ENCODE measurements at regions of chr17 and their contacts with region 1.

Region 1: DNA sequence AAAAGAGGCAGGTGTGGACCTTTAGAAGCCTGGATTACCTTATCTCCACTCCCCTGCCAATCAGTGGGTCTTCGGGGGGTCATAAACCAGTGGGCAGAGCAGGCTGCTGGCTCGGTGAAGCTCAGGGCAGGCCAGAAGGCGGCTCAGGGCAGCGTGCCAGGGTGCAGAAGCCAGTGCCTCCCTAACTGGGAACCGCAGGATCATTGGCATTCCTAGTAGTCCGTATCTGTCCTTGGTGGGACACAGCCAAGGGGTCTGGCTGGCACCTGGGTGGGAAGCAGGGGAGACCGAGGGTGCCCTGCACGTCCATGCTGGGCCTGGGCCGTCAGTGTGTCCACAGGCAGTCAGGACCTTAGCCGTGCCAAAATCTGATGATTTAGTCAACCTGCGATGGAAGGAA is 76.8 kb downstream of the SEC14L1 start:
- DNase-seq: no peak
- ATAC-seq: no peak
- H3K4me3 ChIP-seq: no peak overlapping the region
- H3K27ac ChIP-seq: no peak overlapping the region
- H3K4me1 ChIP-seq: no peaks in the 10 kb centered on the region
- H3K27me3 ChIP-seq: no peaks in the 10 kb centered on the region
- CTCF ChIP-seq: no peak

Region 2: GRCh38 chr17:77127735-77128361 is 89.7 kb before region 1 on chr17:
- CTCF ChIA-PET with region 1: no interaction called
- POLR2A ChIA-PET with region 1: no interaction called
- intact Hi-C with region 1: no loop called
- DNase-seq: no peak
- ATAC-seq: no peak
- H3K4me3 ChIP-seq: no peak overlapping the region
- H3K27ac ChIP-seq: peak overlapping the region; percentile 95; the same call in 1 of the 2 replicates
- H3K4me1 ChIP-seq: peaks cover 60% of the 10 kb centered on the region
- H3K27me3 ChIP-seq: no peaks in the 10 kb centered on the region
- CTCF ChIP-seq: no peak

Region 3: DNA sequence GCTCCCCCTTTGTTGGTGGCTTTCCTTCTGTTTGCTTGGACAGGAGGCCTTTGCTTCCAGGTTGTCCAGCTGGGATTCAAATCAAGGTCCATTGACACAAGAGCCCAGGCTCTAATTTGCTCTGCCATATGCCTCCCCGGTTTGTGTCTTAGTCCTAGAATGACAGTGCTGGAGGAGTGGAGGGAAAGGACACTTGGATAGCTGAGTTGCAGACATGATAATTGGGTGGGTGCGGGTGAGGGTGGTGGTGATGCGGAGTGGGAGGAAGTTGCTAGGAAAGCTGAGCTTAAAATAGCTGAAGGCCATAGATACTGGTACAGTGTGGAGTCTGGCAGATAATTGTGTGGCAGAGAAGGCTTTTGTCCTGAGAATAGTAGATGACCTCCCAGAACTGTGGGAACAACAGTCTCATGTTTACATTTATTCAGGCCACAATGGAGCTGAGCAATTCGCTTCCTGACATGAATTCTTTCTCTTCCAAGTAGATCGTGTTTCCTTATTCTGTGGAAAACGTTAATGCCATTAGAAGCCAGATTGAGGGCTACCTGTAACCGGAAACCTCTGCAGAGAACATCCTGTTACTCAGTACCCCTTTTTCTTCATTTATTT is 53.0 kb before region 1 on chr17:
- CTCF ChIA-PET with region 1: no interaction called
- POLR2A ChIA-PET with region 1: no interaction called
- intact Hi-C with region 1: no loop called
- DNase-seq: no peak
- ATAC-seq: peak; percentile 25; the same call in 1 of the 2 replicates
- H3K4me3 ChIP-seq: no peak overlapping the region
- H3K27ac ChIP-seq: no peak overlapping the region
- H3K4me1 ChIP-seq: peaks cover 6% of the 10 kb centered on the region; the same call in 1 of the 2 replicates
- H3K27me3 ChIP-seq: no peaks in the 10 kb centered on the region
- CTCF ChIP-seq: no peak

Region 4: DNA sequence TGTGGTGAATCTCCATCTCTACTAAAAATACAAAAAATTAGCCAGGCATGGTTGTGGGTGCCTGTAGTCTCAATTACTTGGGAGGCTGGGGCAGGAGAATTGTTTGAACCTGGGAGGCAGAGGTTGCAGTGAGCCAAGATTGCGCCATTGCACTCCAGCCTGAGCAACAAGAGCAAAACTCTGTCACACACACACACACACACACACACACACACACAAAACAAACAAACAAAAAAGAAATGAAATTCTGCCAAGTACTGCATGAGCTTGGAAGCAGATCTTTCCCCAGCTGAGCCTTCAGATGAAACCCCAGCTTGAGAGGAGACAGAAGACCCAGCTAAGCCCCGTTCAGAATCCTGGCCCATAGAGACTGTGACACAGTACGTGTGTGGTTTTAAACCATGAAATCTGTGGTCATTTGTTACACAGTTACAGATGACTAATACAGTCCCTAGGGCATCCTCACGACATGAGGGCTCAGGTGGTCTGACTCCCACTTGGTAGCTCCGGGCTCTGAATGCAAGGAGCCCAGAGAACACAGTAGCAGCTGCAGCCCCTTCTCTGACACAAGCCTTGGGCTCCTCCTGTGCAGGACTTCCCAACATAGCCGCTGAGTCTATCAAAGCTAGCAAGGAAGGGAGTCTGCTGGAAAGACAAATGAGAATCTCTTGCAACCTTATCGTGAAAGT is 56.0 kb after region 1 on chr17:
- CTCF ChIA-PET with region 1: interaction called, 14 read pairs
- POLR2A ChIA-PET with region 1: no interaction called
- intact Hi-C with region 1: no loop called
- DNase-seq: peak; percentile 49
- ATAC-seq: peak; percentile 46
- H3K4me3 ChIP-seq: no peak overlapping the region
- H3K27ac ChIP-seq: no peak overlapping the region
- H3K4me1 ChIP-seq: peaks cover 14% of the 10 kb centered on the region; the same call in 1 of the 2 replicates
- H3K27me3 ChIP-seq: no peaks in the 10 kb centered on the region
- CTCF ChIP-seq: no peak

Measured in PC-3 (cell line).